GM10248 (cell line): ENCODE measurements at regions of chr14 and their contacts with region 1.

Region 1: GRCh38 chr14:81453166-81453766 is 53.1 kb upstream of the STON2 start:
- DNase-seq: peak; percentile 58
- CTCF ChIP-seq: peak; percentile 81

Region 2: GRCh38 chr14:81247146-81247766 is 206.0 kb before region 1 on chr14:
- CTCF ChIA-PET with region 1: interaction called, 12 read pairs
- POLR2A ChIA-PET with region 1: no interaction called
- DNase-seq: no peak
- CTCF ChIP-seq: no peak

Region 3: GRCh38 chr14:81269100-81269978 is 183.9 kb before region 1 on chr14:
- CTCF ChIA-PET with region 1: interaction called, 137 read pairs
- POLR2A ChIA-PET with region 1: no interaction called
- DNase-seq: peak; percentile 74
- CTCF ChIP-seq: peak; percentile 67

Region 4: GRCh38 chr14:81436296-81437138 is 16.7 kb before region 1 on chr14:
- CTCF ChIA-PET with region 1: interaction called, 85 read pairs
- POLR2A ChIA-PET with region 1: no interaction called
- DNase-seq: peak; percentile 80
- CTCF ChIP-seq: no peak

Region 5: GRCh38 chr14:81464247-81465002 is 11.2 kb after region 1 on chr14:
- CTCF ChIA-PET with region 1: interaction called, 72 read pairs
- POLR2A ChIA-PET with region 1: no interaction called
- DNase-seq: peak; percentile 66
- CTCF ChIP-seq: peak; percentile 83